HepG2 (cell line): ENCODE measurements at regions of chr11 and their contacts with region 1.

Region 1: DNA sequence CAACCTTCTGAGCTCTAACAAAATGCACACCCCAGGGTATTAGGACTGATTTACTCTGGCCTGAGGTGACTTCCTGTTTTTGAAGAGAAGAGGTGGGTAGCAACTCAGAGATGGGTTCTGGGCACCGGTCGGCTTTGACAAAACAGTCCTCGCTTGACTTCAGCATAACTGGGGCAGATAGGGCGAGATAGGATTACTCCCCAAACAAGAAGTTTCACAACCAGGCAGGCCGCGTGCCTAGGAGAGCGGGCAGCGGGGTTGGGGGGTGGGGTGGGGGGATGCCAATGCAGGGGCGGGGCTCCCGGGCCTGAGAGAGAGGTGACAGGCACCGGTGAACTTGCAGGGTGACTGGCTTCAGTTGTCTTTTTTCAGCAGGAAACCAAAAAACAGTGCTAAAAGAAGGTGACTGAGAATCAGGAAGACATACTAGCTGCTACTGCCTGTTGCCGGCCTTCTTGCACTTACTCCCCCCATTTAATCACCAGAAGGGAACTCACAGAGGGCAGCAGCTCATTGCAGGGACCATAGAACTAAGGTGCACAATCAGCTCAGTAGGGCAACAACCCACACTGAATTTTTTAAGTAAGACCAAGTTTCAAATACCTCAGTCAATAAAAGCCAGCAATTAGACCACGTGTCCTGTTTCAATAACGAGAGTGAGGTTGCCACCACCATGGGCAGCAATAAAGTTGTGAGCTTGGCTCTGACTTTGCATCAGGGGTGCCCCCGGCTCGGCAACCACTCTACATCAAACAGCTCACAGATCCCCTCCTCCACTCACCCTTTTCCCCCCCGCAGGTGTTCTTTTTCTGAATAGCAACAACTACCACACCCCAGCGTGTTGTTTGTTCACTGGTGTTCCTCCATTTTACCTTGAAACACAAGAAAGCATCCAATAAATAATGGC is 37.2 kb upstream of the ETS1 start:
- DNase-seq: no peak
- ATAC-seq: no peak
- H3K4me3 ChIP-seq: no peak overlapping the region
- H3K27ac ChIP-seq: no peak overlapping the region
- H3K4me1 ChIP-seq: no peaks in the 10 kb centered on the region
- H3K27me3 ChIP-seq: peaks cover under 1 to 56% of the 10 kb centered on the region in 2 experiments; a peak in 4 of 5 replicates
- CTCF ChIP-seq: no peak
- EP300 ChIP-seq: no peak
- POLR2A ChIP-seq: no peak
- RAD21 ChIP-seq: no peak

Region 2: GRCh38 chr11:128463371-128463829 is 161.1 kb before region 1 on chr11:
- CTCF ChIA-PET with region 1: no interaction called
- POLR2A ChIA-PET with region 1: no interaction called
- in situ Hi-C with region 1: no loop called
- intact Hi-C with region 1: no loop called
- DNase-seq: no peak
- ATAC-seq: no peak
- H3K4me3 ChIP-seq: no peak overlapping the region
- H3K27ac ChIP-seq: no peak overlapping the region
- H3K4me1 ChIP-seq: peaks cover 17% of the 10 kb centered on the region
- H3K27me3 ChIP-seq: no peaks in the 10 kb centered on the region
- CTCF ChIP-seq: no peak
- EP300 ChIP-seq: no peak
- POLR2A ChIP-seq: no peak
- RAD21 ChIP-seq: no peak

Region 3: DNA sequence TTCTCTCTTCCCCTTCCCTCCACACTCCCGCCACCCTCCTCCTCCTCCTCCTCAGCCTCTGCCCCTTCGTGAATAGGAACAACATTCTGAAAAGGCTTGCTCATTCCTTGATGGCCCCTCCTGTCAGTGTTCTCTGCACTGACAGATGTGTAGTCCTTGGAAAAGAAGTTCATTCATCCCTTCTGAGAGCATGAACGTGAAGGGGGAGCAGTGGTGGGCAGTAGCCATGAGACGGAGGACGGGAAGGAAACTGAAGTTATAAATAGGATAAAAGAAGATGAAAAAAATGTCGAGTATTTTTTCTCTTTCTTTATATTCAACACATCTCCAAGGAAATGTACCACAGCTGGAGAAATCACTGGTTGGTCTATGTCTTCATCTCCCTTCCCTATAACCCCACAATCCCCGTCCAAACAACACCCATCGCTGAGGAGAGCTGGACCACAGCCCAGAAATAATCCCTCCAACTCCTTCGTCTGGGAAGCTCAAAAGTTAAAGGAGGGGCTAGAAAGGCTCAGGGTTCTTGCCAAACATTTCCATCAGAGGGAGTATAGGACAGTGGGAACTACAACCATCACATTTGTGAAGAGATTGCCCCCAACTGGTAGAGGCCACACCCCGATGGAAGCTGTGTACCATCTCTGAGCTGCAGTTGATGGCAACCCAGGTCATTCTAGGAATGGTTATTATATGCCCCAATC is 70.7 kb before region 1 on chr11:
- CTCF ChIA-PET with region 1: no interaction called
- POLR2A ChIA-PET with region 1: no interaction called
- in situ Hi-C with region 1: no loop called
- intact Hi-C with region 1: loop called (anchors 2 kb)
- DNase-seq: no peak
- ATAC-seq: no peak
- H3K4me3 ChIP-seq: no peak overlapping the region
- H3K27ac ChIP-seq: no peak overlapping the region
- H3K4me1 ChIP-seq: no peaks in the 10 kb centered on the region
- H3K27me3 ChIP-seq: peaks cover 2 to 3% of the 10 kb centered on the region in 2 experiments; a peak in 2 of 5 replicates
- CTCF ChIP-seq: no peak
- EP300 ChIP-seq: no peak
- POLR2A ChIP-seq: no peak
- RAD21 ChIP-seq: no peak

Region 4: GRCh38 chr11:128582496-128583366 is 41.8 kb before region 1 on chr11:
- CTCF ChIA-PET with region 1: no interaction called
- POLR2A ChIA-PET with region 1: no interaction called
- in situ Hi-C with region 1: no loop called
- intact Hi-C with region 1: no loop called
- DNase-seq: no peak
- ATAC-seq: no peak
- H3K4me3 ChIP-seq: no peak overlapping the region
- H3K27ac ChIP-seq: no peak overlapping the region
- H3K4me1 ChIP-seq: no peaks in the 10 kb centered on the region
- H3K27me3 ChIP-seq: no peaks in the 10 kb centered on the region; a peak in 2 of 5 replicates
- CTCF ChIP-seq: no peak
- EP300 ChIP-seq: no peak
- POLR2A ChIP-seq: no peak
- RAD21 ChIP-seq: no peak

Region 5: GRCh38 chr11:128653801-128654231 is 29.3 kb after region 1 on chr11:
- CTCF ChIA-PET with region 1: no interaction called
- POLR2A ChIA-PET with region 1: no interaction called
- in situ Hi-C with region 1: no loop called
- intact Hi-C with region 1: no loop called
- DNase-seq: no peak
- ATAC-seq: no peak
- H3K4me3 ChIP-seq: no peak overlapping the region
- H3K27ac ChIP-seq: no peak overlapping the region
- H3K4me1 ChIP-seq: no peaks in the 10 kb centered on the region
- H3K27me3 ChIP-seq: no peaks in the 10 kb centered on the region; a peak in 2 of 5 replicates
- CTCF ChIP-seq: no peak
- EP300 ChIP-seq: no peak
- POLR2A ChIP-seq: no peak
- RAD21 ChIP-seq: no peak